Naive thymus-derived CD4-positive, alpha-beta T cell (primary cell): ENCODE measurements at regions of chr12 and their contacts with region 1.

Region 1: GRCh38 chr12:67630373-67631088 is 18.0 kb upstream of the DYRK2 start:
- DNase-seq: peak; percentile 51 to 97 (median 96)
- ATAC-seq: peak; percentile 100
- H3K4me3 ChIP-seq: peak overlapping the region; percentile 20
- H3K4me3 Mint-ChIP-seq: peak overlapping the region; percentile 21 to 89 (median 78)
- H3K27ac ChIP-seq: peak overlapping the region; percentile 79
- H3K27ac Mint-ChIP-seq: peak overlapping the region; percentile 91 to 100 (median 96)
- H3K4me1 ChIP-seq: peaks cover 83 to 85% of the 10 kb centered on the region in 2 donors
- H3K4me1 Mint-ChIP-seq: peaks cover 42 to 98% (median 93%) of the 10 kb centered on the region in 7 donors
- H3K27me3 ChIP-seq: no peaks in the 10 kb centered on the region
- H3K27me3 Mint-ChIP-seq: peaks cover 0 to 12% (median 0%) of the 10 kb centered on the region in 5 donors

Region 2: GRCh38 chr12:66288121-66288520 is 1342.4 kb before region 1 on chr12:
- CTCF ChIA-PET with region 1: no interaction called
- POLR2A ChIA-PET with region 1: no interaction called
- intact Hi-C with region 1: loop called in 1 of 2 experiments (anchors 5 kb)
- DNase-seq: peak in 8 of 9 donors; percentile 48 to 93 (median 89)
- ATAC-seq: peak; percentile 96
- H3K4me3 ChIP-seq: peak overlapping the region; percentile 47
- H3K4me3 Mint-ChIP-seq: peak overlapping the region; percentile 57 to 82 (median 68)
- H3K27ac ChIP-seq: peak overlapping the region; percentile 4
- H3K27ac Mint-ChIP-seq: peak overlapping the region; percentile 70 to 96 (median 85)
- H3K4me1 ChIP-seq: peaks cover 57 to 80% of the 10 kb centered on the region in 2 donors
- H3K4me1 Mint-ChIP-seq: peaks cover 61 to 100% (median 84%) of the 10 kb centered on the region in 7 donors
- H3K27me3 ChIP-seq: no peaks in the 10 kb centered on the region
- H3K27me3 Mint-ChIP-seq: no peaks in the 10 kb centered on the region

Region 3: DNA sequence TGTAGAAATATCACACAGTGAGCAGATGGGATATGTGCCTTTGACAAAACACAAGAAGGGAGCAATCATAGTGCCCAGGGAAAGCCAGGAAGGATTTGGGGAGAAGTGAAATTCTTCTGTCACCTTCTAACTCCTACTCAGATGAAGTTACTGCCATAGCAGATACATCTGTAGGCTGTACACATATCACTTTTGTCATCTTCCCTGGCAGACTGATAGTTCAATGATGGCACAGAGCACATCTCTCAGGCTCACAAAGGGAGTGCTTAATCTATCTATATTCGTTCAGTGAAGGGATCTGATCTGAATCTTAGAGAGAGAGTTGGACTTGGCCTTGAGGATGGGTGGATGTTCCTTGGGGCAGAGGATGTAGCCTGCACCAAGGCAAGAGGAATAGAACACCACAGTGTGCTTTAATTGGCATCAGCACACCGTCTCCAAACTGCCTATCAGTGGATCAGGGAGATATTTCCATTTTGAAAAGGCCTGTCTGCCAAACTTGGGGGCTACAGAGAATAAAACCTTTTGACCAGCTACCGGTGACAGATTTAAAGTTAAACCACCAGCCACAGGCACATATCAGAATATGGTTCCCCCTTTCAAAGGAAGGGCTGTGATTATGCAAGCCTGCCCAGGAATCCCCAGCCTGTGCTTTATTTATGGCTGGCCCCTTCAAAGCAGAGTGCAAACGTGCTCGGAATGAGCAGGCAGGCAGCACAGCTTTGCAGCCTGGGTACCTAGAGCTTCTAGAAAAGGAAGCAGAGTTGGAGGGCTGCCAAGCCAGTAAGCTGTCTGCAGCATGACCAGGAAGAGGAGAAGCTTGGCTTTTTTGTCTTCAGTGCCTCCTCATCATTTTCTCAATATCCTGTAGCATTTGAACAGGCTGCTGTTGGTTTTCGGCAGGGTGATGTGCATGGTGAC is 147.5 kb before region 1 on chr12:
- CTCF ChIA-PET with region 1: interaction called, 3 read pairs
- POLR2A ChIA-PET with region 1: interaction called, 18 read pairs
- intact Hi-C with region 1: loop called in 1 of 2 experiments (anchors 1 kb)
- DNase-seq: peak in 8 of 9 donors; percentile 47 to 89 (median 82)
- ATAC-seq: peak; percentile 89
- H3K4me3 ChIP-seq: no peak overlapping the region
- H3K4me3 Mint-ChIP-seq: peak overlapping the region in 9 of 10 donors; percentile 1 to 61 (median 26)
- H3K27ac ChIP-seq: peak overlapping the region; percentile 49
- H3K27ac Mint-ChIP-seq: peak overlapping the region; percentile 41 to 91 (median 82)
- H3K4me1 ChIP-seq: peaks cover 39 to 45% of the 10 kb centered on the region in 2 donors
- H3K4me1 Mint-ChIP-seq: peaks cover 28 to 49% (median 46%) of the 10 kb centered on the region in 7 donors
- H3K27me3 ChIP-seq: no peaks in the 10 kb centered on the region
- H3K27me3 Mint-ChIP-seq: no peaks in the 10 kb centered on the region

Region 4: GRCh38 chr12:67592216-67593011 is 38.1 kb before region 1 on chr12:
- CTCF ChIA-PET with region 1: no interaction called
- POLR2A ChIA-PET with region 1: interaction called, 16 read pairs
- intact Hi-C with region 1: loop called (anchors 1 kb)
- DNase-seq: peak in 5 of 9 donors; percentile 20 to 40 (median 33)
- ATAC-seq: no peak
- H3K4me3 ChIP-seq: no peak overlapping the region
- H3K4me3 Mint-ChIP-seq: peak overlapping the region; percentile 6 to 84 (median 46)
- H3K27ac ChIP-seq: no peak overlapping the region
- H3K27ac Mint-ChIP-seq: peak overlapping the region; percentile 79 to 94 (median 86)
- H3K4me1 ChIP-seq: peaks cover 37 to 55% of the 10 kb centered on the region in 2 donors
- H3K4me1 Mint-ChIP-seq: peaks cover 40 to 79% (median 58%) of the 10 kb centered on the region in 7 donors
- H3K27me3 ChIP-seq: no peaks in the 10 kb centered on the region
- H3K27me3 Mint-ChIP-seq: no peaks in the 10 kb centered on the region

Region 5: GRCh38 chr12:68180792-68181744 is 550.5 kb after region 1 on chr12:
- CTCF ChIA-PET with region 1: no interaction called
- POLR2A ChIA-PET with region 1: no interaction called
- intact Hi-C with region 1: loop called in 1 of 2 experiments (anchors 10 kb)
- DNase-seq: peak in 8 of 9 donors; percentile 43 to 77 (median 68)
- ATAC-seq: peak; percentile 92
- H3K4me3 ChIP-seq: peak overlapping the region; percentile 5
- H3K4me3 Mint-ChIP-seq: peak overlapping the region; percentile 3 to 69 (median 60)
- H3K27ac ChIP-seq: peak overlapping the region; percentile 64
- H3K27ac Mint-ChIP-seq: peak overlapping the region; percentile 75 to 94 (median 88)
- H3K4me1 ChIP-seq: peaks cover 33 to 53% of the 10 kb centered on the region in 2 donors
- H3K4me1 Mint-ChIP-seq: peaks cover 33 to 60% (median 55%) of the 10 kb centered on the region in 7 donors
- H3K27me3 ChIP-seq: no peaks in the 10 kb centered on the region
- H3K27me3 Mint-ChIP-seq: peaks cover 0 to 3% (median 0%) of the 10 kb centered on the region in 5 donors